ENCODE measurements at regions of chr1 and their contacts with region 1.

Region 1: DNA sequence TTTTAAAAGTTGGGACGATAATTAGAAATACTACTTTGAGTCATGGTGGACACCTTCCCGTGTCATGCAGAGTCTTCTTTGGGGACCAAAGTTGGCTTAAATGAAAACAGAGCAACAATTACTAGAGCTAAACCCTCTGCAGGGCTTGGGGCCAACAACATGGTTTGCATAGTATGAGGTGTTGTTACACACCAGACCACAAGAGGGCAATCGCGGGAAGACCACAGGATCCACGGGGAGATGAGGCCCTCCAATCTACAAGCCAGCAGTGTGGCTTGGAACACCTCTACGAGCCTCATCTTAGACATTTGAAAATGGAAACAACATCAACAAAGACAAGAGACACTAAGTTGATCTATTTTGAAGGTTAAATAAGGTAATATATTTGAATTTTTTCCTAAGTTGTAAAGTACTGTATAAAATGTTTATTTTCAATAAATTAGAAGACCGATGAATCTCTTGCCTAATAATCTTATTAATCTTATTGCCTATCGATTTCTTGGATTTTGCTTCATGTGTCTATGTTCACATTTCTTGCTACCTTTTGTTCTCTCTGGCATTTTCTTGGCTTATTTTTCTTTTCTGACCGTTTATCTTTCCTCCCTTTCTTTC is 8.2 kb upstream of the SMCP start:
- DNase-seq: peak; percentile 54
- H3K4me3 ChIP-seq: no peak overlapping the region
- H3K27ac ChIP-seq: no peak overlapping the region
- H3K4me1 ChIP-seq: peaks cover 3% of the 10 kb centered on the region
- H3K27me3 ChIP-seq: no peaks in the 10 kb centered on the region
- CTCF ChIP-seq: peak; percentile 83 to 86

Region 2: GRCh38 chr1:152745289-152745704 is 124.6 kb before region 1 on chr1:
- CTCF ChIA-PET with region 1: interaction called, 3 read pairs
- dilution Hi-C with region 1: no loop called
- in situ Hi-C with region 1: no loop called
- intact Hi-C with region 1: loop called (anchors 1 kb)
- DNase-seq: peak; percentile 44
- H3K4me3 ChIP-seq: no peak overlapping the region
- H3K27ac ChIP-seq: no peak overlapping the region
- H3K4me1 ChIP-seq: peaks cover 58% of the 10 kb centered on the region
- H3K27me3 ChIP-seq: no peaks in the 10 kb centered on the region
- CTCF ChIP-seq: peak; percentile 14 to 35

Region 3: DNA sequence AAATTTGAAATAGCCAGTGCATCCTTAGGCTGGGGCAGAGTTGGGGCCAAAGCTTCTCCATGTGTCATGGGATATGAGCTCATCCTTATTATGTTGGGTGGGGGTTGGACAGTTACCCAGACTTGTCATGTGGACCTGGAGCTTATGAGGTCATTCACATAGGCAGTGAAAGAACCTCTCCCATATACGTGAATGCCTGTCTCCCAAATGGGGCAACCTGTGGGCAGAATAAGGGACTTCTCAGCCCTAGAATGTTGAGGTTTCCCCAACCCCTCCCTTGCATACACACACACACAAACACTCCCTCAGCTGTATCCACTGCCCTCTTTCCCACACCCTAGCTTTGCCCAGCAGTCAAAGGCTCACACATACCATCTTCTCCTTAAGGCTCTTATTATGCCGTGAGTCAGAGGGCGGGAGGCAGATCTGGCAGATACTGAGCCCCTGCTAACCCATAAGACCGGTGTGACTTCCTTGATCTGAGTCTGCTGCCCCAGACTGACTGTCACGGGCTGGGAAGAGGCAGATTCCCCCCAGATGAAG is 36.2 kb after region 1 on chr1:
- CTCF ChIA-PET with region 1: interaction called, 5 read pairs
- dilution Hi-C with region 1: no loop called
- in situ Hi-C with region 1: no loop called
- intact Hi-C with region 1: loop called (anchors 5 kb)
- DNase-seq: peak; percentile 100
- H3K4me3 ChIP-seq: peak overlapping the region in 1 of 3 experiments; percentile 0
- H3K27ac ChIP-seq: peak overlapping the region; percentile 90
- H3K4me1 ChIP-seq: peaks cover 58% of the 10 kb centered on the region
- H3K27me3 ChIP-seq: no peaks in the 10 kb centered on the region
- CTCF ChIP-seq: no peak

Region 4: DNA sequence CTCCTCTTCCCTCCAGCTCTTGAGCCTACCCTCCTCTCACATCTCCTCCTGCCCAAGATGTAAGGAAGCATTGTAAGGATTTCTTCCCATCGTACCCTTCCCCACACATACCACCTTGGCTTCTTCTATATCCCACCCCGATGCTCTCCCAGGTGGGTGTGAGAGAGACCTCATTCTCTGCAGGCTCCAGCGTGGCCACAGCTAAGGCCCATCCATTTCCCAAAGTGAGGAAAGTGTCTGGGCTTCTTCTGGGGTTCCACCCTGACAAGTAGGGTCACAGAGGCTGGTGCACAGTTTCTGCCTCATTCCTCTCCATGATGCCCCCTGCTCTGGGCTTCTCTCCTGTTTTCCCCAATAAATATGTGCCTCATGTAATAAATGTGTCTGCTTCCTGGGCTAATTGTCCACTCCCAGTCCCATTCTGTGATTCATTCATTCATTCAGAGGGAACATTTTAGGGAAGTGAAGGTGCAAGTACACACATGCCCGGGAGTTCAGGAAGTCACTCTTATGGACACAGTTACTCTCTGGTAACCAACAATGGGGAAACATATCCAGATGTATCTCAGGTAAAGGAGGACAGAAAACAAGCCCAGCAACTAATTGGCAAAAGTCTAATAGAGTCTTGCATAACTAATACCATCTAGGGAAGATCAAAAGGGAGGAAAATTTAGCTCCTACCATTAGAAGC is 102.4 kb after region 1 on chr1:
- CTCF ChIA-PET with region 1: no interaction called
- dilution Hi-C with region 1: no loop called
- in situ Hi-C with region 1: no loop called
- intact Hi-C with region 1: no loop called
- DNase-seq: peak; percentile 84
- H3K4me3 ChIP-seq: no peak overlapping the region
- H3K27ac ChIP-seq: peak overlapping the region; percentile 65
- H3K4me1 ChIP-seq: peaks cover 26% of the 10 kb centered on the region
- H3K27me3 ChIP-seq: no peaks in the 10 kb centered on the region
- CTCF ChIP-seq: no peak

Region 5: GRCh38 chr1:153032677-153033308 is 162.9 kb after region 1 on chr1:
- CTCF ChIA-PET with region 1: no interaction called
- dilution Hi-C with region 1: no loop called
- in situ Hi-C with region 1: no loop called
- intact Hi-C with region 1: loop called (anchors 1 kb)
- DNase-seq: peak; percentile 97
- H3K4me3 ChIP-seq: peak overlapping the region in 1 of 3 experiments; percentile 47
- H3K27ac ChIP-seq: peak overlapping the region; percentile 65
- H3K4me1 ChIP-seq: peaks cover 39% of the 10 kb centered on the region
- H3K27me3 ChIP-seq: no peaks in the 10 kb centered on the region
- CTCF ChIP-seq: peak; percentile 63 to 73

Region 6: DNA sequence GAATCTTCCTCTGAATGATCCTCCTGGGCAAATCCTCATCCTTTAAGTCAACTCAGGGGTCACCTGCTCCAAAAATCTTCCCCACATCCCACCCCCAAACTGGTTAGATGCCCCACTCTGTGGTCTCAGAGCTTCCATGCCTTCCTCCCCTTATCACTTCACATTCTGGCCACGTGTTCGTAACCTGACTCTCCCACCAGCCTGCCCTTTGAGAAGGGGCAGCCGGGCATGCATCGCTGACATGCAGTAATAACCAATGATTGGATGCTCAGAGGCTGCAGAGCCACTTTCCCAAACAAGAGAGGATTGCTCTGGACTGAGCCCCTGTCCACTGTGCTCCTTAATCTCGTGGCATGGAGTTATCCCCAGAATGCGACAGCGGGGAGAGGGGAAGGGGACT is 340.3 kb after region 1 on chr1:
- CTCF ChIA-PET with region 1: no interaction called
- dilution Hi-C with region 1: no loop called
- in situ Hi-C with region 1: no loop called
- intact Hi-C with region 1: no loop called
- DNase-seq: no peak
- H3K4me3 ChIP-seq: no peak overlapping the region
- H3K27ac ChIP-seq: no peak overlapping the region
- H3K4me1 ChIP-seq: no peaks in the 10 kb centered on the region
- H3K27me3 ChIP-seq: no peaks in the 10 kb centered on the region
- CTCF ChIP-seq: no peak

Region 7: DNA sequence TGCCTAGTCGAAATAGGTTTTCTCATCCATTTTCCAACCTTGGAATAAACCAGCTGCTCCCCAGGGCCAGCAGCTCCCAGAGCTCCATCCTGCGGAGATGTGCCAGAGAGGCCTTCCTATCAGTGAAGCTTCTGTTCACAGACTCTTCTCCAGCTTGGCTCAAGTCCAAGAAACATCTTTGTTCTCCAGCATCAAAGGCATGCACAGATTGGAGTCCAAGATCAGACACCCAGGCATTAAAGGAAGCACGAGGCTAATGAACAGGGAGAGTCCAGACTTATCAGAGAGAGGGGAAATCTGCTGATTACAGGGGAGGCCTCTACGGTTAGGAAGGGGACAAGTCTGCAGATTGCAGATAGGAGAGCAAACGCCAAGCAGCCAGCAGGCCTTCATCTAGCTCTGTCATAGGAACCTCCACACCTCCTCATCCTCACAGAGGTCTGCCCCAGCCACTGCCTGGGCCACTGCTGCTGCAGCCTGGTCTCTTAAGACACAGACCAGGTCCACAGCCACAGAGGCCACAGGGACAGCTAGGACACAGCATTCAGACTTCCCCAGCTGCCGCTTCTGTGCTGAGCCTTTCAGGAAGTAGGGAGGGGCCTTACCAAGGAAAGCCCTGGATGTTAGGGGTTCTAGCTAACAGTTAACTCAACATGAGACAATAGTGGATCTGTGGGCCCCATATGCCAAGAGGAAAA is 350.8 kb after region 1 on chr1:
- CTCF ChIA-PET with region 1: no interaction called
- dilution Hi-C with region 1: no loop called
- in situ Hi-C with region 1: no loop called
- intact Hi-C with region 1: loop called (anchors 1 kb)
- DNase-seq: no peak
- H3K4me3 ChIP-seq: no peak overlapping the region
- H3K27ac ChIP-seq: no peak overlapping the region
- H3K4me1 ChIP-seq: no peaks in the 10 kb centered on the region
- H3K27me3 ChIP-seq: no peaks in the 10 kb centered on the region
- CTCF ChIP-seq: no peak

Region 8: DNA sequence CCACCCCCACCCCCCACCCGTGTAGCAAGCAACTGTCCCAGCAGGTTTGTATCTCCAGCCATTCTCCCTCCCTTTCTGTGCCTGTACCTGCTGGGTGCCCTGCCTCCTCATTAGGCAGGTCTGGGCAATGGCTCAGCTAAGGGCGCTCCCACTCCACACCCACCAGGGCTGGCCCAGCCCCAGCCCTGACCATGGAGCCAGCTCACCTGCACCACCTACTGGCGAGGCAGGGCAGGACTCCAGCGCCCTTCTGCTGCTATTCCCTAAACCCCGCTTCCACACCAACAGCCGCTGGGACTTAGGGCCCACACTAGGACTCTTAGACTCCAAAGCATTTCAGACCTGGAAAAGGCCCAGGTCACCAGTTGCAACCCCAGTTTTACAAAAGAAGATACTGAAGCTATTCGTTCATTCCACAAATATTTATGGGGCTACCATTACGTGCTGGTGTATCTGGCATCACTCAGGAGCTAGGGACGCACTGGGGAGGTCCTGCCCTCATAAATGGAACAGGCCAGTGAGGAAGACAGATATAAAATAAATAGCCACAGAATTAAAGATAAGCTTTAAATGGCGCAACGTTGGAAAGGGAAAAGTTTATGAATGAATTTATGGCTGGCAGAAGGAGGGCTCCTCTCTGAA is 418.8 kb after region 1 on chr1:
- CTCF ChIA-PET with region 1: no interaction called
- dilution Hi-C with region 1: no loop called
- in situ Hi-C with region 1: no loop called
- intact Hi-C with region 1: loop called (anchors 5 kb)
- DNase-seq: peak; percentile 83
- H3K4me3 ChIP-seq: no peak overlapping the region
- H3K27ac ChIP-seq: no peak overlapping the region
- H3K4me1 ChIP-seq: peaks cover 34% of the 10 kb centered on the region
- H3K27me3 ChIP-seq: no peaks in the 10 kb centered on the region
- CTCF ChIP-seq: peak; percentile 75 to 89

Measured in mammary epithelial cell (primary cell).